AG04449 (cell line): ENCODE measurements at regions of chr2 and their contacts with region 1.

Region 1: GRCh38 chr2:29295857-29296256 is 180.6 kb downstream of the CLIP4 start:
- DNase-seq: no peak
- H3K4me3 ChIP-seq: no peak overlapping the region
- CTCF ChIP-seq: peak; percentile 41

Region 2: DNA sequence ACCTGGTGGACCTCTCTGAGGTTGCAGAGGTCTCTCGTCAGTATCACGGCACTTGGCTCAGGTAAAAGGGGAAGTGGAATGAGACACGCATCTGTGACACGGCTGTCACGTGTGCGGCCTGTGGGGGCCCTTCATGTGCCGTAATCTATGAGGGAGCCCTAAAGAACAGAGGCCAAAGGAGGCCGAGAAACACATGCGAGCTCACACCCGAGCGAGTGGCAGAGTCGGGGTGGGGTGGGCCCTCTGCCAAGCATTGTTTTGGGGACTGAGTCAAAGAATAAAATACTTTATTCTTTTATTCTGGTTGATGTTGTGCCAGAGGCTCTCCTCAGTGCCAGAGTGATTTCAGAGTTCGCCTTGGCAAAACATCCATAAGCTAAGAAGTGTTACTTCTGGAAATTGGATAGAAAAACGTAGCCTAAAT is 756.7 kb before region 1 on chr2:
- CTCF ChIA-PET with region 1: no interaction called
- POLR2A ChIA-PET with region 1: no interaction called
- DNase-seq: no peak
- H3K4me3 ChIP-seq: no peak overlapping the region
- CTCF ChIP-seq: no peak

Region 3: GRCh38 chr2:29139152-29139551 is 156.7 kb before region 1 on chr2:
- CTCF ChIA-PET with region 1: no interaction called
- POLR2A ChIA-PET with region 1: no interaction called
- DNase-seq: no peak
- H3K4me3 ChIP-seq: no peak overlapping the region
- CTCF ChIP-seq: no peak

Region 4: GRCh38 chr2:29841386-29842004 is 545.6 kb after region 1 on chr2:
- CTCF ChIA-PET with region 1: interaction called, 10 read pairs
- POLR2A ChIA-PET with region 1: no interaction called
- DNase-seq: no peak
- H3K4me3 ChIP-seq: no peak overlapping the region
- CTCF ChIP-seq: peak; percentile 88